ENCODE measurements at regions of chr2 and their contacts with region 1.

Region 1: GRCh38 chr2:48406116-48406515 is 123.8 kb upstream of the STON1 start:
- DNase-seq: no peak

Region 2: DNA sequence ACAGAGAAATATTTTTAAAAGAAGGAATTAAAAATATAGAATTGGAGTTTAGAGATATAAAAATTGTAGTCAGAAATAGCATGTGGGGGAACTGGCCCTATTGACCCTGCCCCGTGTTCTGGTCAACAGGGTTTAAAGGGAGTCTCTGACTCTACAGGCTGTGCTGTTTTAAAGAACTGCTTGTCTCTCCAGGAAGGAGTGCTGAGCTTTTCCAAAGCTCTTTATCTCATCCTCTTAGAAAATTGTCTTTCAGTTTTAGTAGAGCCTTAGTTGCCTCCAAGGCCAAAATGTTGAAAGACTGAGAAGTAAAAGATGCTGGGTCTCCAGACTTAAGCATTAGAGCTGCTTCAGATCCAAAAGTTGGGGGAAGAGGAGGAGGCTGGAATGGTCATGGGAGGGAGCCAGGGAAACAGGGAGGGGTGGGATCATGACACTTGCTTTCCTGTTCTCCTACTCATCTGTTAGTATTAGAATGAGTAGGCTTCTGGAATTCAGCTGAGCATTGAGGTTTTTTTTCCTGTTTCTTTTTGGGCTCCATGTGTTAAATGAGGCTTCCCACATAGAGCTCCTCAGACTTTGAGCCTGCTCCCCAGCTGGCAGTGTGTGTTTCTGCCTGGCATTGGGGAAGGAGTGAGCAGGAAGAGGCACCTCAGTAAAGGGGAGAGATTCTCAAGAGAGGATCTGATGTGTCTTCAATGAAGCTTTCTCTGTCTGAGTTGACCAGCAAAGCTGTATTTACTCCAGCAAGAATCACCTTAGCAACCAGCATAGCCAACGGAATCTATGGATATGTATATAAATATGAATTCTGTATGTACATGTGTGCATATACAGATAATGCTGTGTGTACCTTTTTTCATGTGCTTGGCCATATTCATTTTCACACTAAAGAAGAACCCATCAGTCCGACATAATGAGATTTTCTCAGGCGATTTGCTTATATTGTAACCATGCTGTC is 313.0 kb before region 1 on chr2:
- intact Hi-C with region 1: no loop called
- DNase-seq: no peak

Region 3: DNA sequence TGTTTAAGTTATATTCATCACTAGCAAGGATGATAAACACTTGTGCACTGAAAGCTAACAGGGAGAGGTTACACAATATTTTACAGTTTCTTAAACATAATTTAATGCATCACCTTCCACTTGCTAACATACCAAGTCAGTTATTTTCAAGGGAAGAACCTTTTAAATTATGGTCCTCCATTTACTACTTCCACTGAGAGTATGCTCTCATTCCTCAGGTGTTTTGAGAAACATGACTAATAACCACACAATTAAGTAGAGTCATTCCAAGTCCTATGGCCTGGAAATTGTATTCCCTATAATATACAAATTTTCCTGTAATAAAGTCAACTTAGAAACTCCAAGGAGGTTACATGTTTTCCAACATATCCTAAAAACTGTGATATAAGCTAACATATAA is 28.5 kb before region 1 on chr2:
- intact Hi-C with region 1: no loop called
- DNase-seq: no peak

Region 4: GRCh38 chr2:49901202-49902065 is 1495.3 kb after region 1 on chr2:
- intact Hi-C with region 1: loop called in 1 of 2 experiments (anchors 10 kb)
- DNase-seq: no peak